ENCODE measurements at regions of chr7 and their contacts with region 1.

Region 1: GRCh38 chr7:29988424-29989256 is 961 bp downstream of the SCRN1 start:
- DNase-seq: no peak
- H3K4me3 ChIP-seq: peak overlapping the region; percentile 91 to 95
- H3K27ac ChIP-seq: peak overlapping the region; percentile 89 to 90
- H3K4me1 ChIP-seq: no peaks in the 10 kb centered on the region
- H3K27me3 ChIP-seq: no peaks in the 10 kb centered on the region
- CTCF ChIP-seq: no peak
- POLR2A ChIP-seq: peak; percentile 23

Region 2: GRCh38 chr7:30026229-30027064 is 37.8 kb after region 1 on chr7 and contains the start of gene FKBP14:
- intact Hi-C with region 1: loop called (anchors 1 kb)
- DNase-seq: peak; percentile 98
- H3K4me3 ChIP-seq: peak within 1 kb of the TSS; percentile 76 to 84
- H3K27ac ChIP-seq: peak within 1 kb of the TSS; percentile 85 to 86
- H3K4me1 ChIP-seq: peaks cover 3% of the 10 kb centered on the region
- H3K27me3 ChIP-seq: no peaks in the 10 kb centered on the region
- CTCF ChIP-seq: peak in 1 of 4 experiments; percentile 5
- POLR2A ChIP-seq: no peak
- total RNA-seq, gene FKBP14: 8.4 to 9.5 TPM

Region 3: DNA sequence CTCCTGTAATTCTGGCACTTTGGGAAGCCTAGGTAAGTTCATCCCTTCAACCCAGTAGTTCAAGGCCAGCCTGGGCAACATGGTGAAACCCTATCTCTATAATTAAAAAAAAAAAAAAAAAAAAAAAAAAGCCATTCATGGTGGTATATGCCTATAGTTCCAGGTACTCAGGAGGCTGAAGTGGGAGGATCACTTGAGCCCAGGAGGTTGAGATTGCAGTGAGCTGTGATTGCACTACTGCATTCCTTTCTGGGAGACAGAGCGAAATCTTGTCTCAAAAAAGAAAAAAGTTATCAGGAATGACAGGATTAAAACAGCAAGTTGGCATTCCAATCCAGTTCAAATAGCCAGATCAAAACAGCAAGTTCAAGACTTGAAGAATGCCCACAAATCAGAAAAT is 116.6 kb after region 1 on chr7:
- intact Hi-C with region 1: no loop called
- DNase-seq: no peak
- H3K4me3 ChIP-seq: no peak overlapping the region
- H3K27ac ChIP-seq: no peak overlapping the region
- H3K4me1 ChIP-seq: no peaks in the 10 kb centered on the region
- H3K27me3 ChIP-seq: no peaks in the 10 kb centered on the region
- CTCF ChIP-seq: no peak
- POLR2A ChIP-seq: no peak

Measured in prostate gland (tissue), 2 donors.